Body of pancreas (tissue), 4 donors: ENCODE measurements at regions of chrX and their contacts with region 1.

Region 1: DNA sequence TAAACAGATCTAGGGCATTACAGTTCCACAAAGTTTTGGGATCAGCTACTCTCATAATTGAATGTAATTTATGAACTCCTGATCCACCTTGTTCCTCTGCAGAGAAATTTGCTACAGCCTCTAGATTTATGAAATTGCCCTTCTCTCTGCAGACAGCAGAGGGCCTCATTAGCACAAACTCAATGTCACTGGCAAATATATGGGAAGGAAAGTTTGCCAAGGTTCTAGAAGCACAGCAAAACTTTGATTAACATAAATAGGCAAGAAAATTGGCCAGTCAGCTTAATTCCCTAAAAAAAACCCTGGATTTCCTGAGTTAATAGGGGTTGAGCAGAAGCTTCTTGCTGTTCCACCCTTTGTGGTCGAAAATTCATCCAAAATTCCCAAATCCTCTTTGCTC is 31.5 kb downstream of the PRPS1 start:
- DNase-seq: peak in 3 of 4 donors; percentile 43 to 55 (median 51)
- ATAC-seq: peak; percentile 68
- H3K4me3 ChIP-seq: no peak overlapping the region
- H3K27ac ChIP-seq: no peak overlapping the region
- H3K4me1 ChIP-seq: no peaks in the 10 kb centered on the region
- H3K27me3 ChIP-seq: no peaks in the 10 kb centered on the region
- CTCF ChIP-seq: peak; percentile 39 to 86 (median 62)
- POLR2A ChIP-seq: no peak

Region 2: DNA sequence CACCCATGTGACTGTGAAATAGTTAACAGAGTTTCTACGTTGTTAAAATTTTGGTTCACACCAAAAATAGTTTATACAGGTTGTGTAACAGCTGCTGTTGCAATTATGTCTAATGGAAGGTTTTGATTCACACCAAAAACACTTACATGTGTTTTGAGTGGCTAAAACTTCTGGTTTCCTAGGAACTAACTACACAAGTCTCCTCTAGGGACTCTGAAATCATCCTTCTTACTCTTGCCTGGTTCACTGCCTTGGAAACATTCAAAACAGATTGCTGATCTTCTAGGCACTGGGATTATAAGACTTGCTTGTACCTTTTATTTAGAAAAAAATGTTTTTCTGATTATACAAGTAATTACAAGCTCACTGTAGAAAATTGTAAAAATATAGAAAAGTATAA is 644.8 kb before region 1 on chrX:
- intact Hi-C with region 1: no loop called
- DNase-seq: no peak
- ATAC-seq: no peak
- H3K4me3 ChIP-seq: no peak overlapping the region
- H3K27ac ChIP-seq: no peak overlapping the region
- H3K4me1 ChIP-seq: no peaks in the 10 kb centered on the region
- H3K27me3 ChIP-seq: no peaks in the 10 kb centered on the region
- CTCF ChIP-seq: no peak
- POLR2A ChIP-seq: no peak

Region 3: GRCh38 chrX:107213477-107213876 is 446.3 kb before region 1 on chrX:
- intact Hi-C with region 1: no loop called
- DNase-seq: no peak
- ATAC-seq: no peak
- H3K4me3 ChIP-seq: no peak overlapping the region
- H3K27ac ChIP-seq: no peak overlapping the region
- H3K4me1 ChIP-seq: no peaks in the 10 kb centered on the region
- H3K27me3 ChIP-seq: no peaks in the 10 kb centered on the region
- CTCF ChIP-seq: no peak
- POLR2A ChIP-seq: no peak

Region 4: DNA sequence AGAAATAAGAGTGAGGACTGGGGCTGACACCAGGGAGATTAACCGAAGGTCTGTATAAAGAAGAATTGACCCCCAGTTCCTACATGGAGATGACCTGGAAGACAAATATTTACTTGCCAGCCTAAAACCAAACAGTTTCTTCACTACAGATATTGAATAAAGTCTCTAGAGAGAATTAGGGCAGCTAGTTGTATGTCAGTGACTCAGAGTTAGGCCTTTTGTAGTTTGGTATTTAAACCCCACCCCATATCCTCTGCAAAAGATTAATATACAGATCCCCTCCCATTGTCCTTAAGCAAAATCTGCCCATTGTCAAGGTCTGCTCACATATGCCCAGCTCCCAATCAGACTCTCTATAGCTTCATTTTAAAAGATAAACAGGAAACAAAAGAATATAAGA is 238.4 kb before region 1 on chrX:
- intact Hi-C with region 1: no loop called
- DNase-seq: no peak
- ATAC-seq: no peak
- H3K4me3 ChIP-seq: no peak overlapping the region
- H3K27ac ChIP-seq: no peak overlapping the region
- H3K4me1 ChIP-seq: no peaks in the 10 kb centered on the region
- H3K27me3 ChIP-seq: no peaks in the 10 kb centered on the region
- CTCF ChIP-seq: no peak
- POLR2A ChIP-seq: no peak

Region 5: GRCh38 chrX:107894038-107894437 is 234.3 kb after region 1 on chrX:
- intact Hi-C with region 1: loop called (anchors 10 kb)
- DNase-seq: peak in 1 of 4 donors; percentile 30
- ATAC-seq: no peak
- H3K4me3 ChIP-seq: no peak overlapping the region
- H3K27ac ChIP-seq: no peak overlapping the region
- H3K4me1 ChIP-seq: no peaks in the 10 kb centered on the region
- H3K27me3 ChIP-seq: no peaks in the 10 kb centered on the region
- CTCF ChIP-seq: peak in 6 of 7 experiments; percentile 15 to 58 (median 44)
- POLR2A ChIP-seq: no peak